ENCODE measurements at regions of chr7 and their contacts with region 1.

Region 1: DNA sequence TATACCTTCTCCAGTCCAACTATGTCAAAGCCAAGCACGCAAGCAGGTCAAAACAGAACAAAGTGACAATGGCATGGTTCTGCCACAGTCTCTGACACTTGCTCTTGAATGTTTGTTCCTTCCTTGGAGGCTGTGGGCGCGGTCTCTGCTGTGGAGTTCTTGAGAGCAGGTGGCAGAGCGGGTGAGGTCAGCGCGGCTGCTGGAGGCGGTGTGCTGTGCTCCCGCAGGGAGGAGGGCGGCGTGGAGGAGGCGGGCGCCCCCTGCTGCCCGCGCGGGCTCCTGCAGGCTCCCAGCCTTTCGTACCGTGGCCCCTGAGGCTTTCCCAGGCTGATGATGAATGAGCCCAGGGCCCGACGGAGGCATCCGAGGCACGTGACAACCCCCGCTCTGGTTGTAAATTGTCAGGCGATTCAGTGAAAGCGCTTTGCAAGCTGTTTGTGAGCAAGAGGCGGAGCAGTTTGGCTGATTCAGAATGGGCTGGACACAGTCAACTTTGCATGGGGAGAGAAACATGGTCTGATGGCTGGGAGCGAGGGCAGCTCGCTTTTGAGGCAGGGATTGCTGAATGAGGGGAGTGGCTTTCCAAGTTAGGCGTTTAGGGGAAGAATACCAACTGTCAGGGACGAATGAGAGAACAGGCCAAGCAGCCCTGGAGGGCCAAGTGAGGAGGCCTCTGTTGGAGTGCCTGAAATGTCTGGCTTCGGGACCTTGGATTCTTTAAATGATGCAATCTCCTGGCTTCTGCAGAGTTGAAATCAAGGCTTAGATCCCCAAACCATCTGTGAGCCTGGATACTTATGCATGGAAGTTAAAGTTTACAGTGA is 46.6 kb downstream of the CDHR3 start:
- DNase-seq: peak; percentile 77 to 89
- ATAC-seq: peak; percentile 92 to 100 (median 99)
- H3K4me3 ChIP-seq: no peak overlapping the region
- H3K4me3 Mint-ChIP-seq: no peak overlapping the region
- H3K27ac ChIP-seq: no peak overlapping the region
- H3K27ac Mint-ChIP-seq: no peak overlapping the region
- H3K4me1 ChIP-seq: peaks cover 10% of the 10 kb centered on the region
- H3K4me1 Mint-ChIP-seq: peaks cover 9 to 13% of the 10 kb centered on the region in 2 donors
- H3K27me3 ChIP-seq: peaks cover 5% of the 10 kb centered on the region
- H3K27me3 Mint-ChIP-seq: peaks cover 24 to 54% of the 10 kb centered on the region in 2 donors
- CTCF ChIP-seq: peak; percentile 93

Region 2: GRCh38 chr7:105652359-105652993 is 357.1 kb before region 1 on chr7:
- intact Hi-C with region 1: loop called (anchors 1 kb)
- DNase-seq: peak; percentile 47 to 76
- ATAC-seq: peak; percentile 69 to 86 (median 76)
- H3K4me3 ChIP-seq: no peak overlapping the region
- H3K4me3 Mint-ChIP-seq: no peak overlapping the region
- H3K27ac ChIP-seq: no peak overlapping the region
- H3K27ac Mint-ChIP-seq: no peak overlapping the region
- H3K4me1 ChIP-seq: no peaks in the 10 kb centered on the region
- H3K4me1 Mint-ChIP-seq: peaks cover 19 to 22% of the 10 kb centered on the region in 2 donors
- H3K27me3 ChIP-seq: no peaks in the 10 kb centered on the region
- H3K27me3 Mint-ChIP-seq: no peaks in the 10 kb centered on the region
- CTCF ChIP-seq: peak; percentile 65

Region 3: GRCh38 chr7:105738133-105738532 is 271.5 kb before region 1 on chr7:
- intact Hi-C with region 1: loop called (anchors 1 kb)
- DNase-seq: peak in 1 of 2 donors; percentile 21
- ATAC-seq: no peak
- H3K4me3 ChIP-seq: no peak overlapping the region
- H3K4me3 Mint-ChIP-seq: no peak overlapping the region
- H3K27ac ChIP-seq: no peak overlapping the region
- H3K27ac Mint-ChIP-seq: no peak overlapping the region
- H3K4me1 ChIP-seq: peaks cover 4% of the 10 kb centered on the region
- H3K4me1 Mint-ChIP-seq: peaks cover 40 to 50% of the 10 kb centered on the region in 2 donors
- H3K27me3 ChIP-seq: no peaks in the 10 kb centered on the region
- H3K27me3 Mint-ChIP-seq: no peaks in the 10 kb centered on the region
- CTCF ChIP-seq: no peak

Region 4: DNA sequence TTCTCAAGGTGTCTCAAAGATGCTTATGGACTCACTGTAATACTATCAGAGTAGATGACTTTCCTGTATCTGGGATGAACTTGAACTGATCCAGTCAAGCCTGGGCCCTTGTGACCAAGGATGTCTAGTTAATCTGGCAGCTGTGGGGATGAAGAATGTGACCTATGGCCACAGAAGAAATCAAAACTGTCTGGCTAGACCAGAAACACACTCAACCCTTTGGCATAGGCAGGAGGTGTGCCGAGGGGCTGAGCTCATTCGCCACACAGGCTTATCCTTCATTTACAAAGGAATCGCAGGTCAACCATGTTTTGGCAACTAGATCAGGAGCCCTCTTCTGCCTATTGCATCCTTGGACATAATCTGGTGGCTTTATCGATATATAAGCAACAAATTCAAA is 243.8 kb before region 1 on chr7:
- intact Hi-C with region 1: loop called (anchors 1 kb)
- DNase-seq: no peak
- ATAC-seq: no peak
- H3K4me3 ChIP-seq: no peak overlapping the region
- H3K4me3 Mint-ChIP-seq: no peak overlapping the region
- H3K27ac ChIP-seq: no peak overlapping the region
- H3K27ac Mint-ChIP-seq: no peak overlapping the region
- H3K4me1 ChIP-seq: peaks cover 5% of the 10 kb centered on the region
- H3K4me1 Mint-ChIP-seq: peaks cover 24 to 44% of the 10 kb centered on the region in 2 donors
- H3K27me3 ChIP-seq: no peaks in the 10 kb centered on the region
- H3K27me3 Mint-ChIP-seq: no peaks in the 10 kb centered on the region
- CTCF ChIP-seq: no peak

Region 5: DNA sequence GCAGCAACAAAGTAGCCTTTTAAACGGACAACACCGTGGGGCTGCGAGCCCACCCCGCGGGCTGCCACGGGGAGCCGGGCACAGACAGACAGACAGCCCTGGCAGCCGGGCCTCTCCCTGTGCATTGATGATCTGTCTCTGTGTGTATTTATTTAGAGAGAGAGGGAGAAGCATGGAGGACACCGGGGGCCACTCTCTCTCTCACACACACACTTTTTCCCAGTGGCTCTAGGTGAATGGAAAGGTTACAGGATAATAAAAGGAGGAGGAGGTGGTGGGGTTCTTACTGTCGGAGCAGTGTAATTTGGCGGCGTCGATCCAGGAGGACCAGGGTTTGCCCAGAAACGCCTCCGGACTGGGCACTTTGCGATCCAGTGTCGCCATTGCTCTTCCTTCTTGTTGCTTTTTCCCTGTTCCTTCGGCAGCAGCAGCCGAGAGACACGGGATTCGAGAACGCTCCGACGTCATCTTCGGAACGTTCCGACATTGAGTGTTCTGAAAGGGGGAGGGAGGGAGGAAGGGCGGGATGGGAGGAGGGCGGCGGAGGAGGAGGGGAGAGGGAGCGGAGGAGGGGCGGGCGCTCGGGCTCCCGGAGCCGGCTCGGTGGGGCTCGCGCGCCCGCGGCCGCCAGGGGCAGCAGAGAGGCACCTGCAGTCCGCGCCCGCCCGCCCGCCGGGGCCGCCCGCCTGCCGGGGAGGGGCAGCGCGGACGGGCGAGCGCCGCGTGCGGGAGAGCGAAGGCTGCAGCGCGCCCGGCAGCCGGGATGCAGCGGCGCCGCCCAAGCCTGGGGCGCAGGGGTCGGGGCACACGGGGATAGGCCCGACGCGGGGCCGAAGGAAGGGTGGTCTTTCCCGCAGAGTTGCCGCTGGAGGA is 133.3 kb before region 1 on chr7 and contains the start of gene ATXN7L1:
- intact Hi-C with region 1: loop called (anchors 5 kb)
- DNase-seq: peak; percentile 90 to 95
- ATAC-seq: peak; percentile 97 to 99 (median 99)
- H3K4me3 ChIP-seq: peak within 1 kb of the TSS; percentile 81
- H3K4me3 Mint-ChIP-seq: peak within 1 kb of the TSS; percentile 98
- H3K27ac ChIP-seq: peak within 1 kb of the TSS; percentile 56
- H3K27ac Mint-ChIP-seq: peak within 1 kb of the TSS; percentile 85 to 96
- H3K4me1 ChIP-seq: peaks cover 31% of the 10 kb centered on the region
- H3K4me1 Mint-ChIP-seq: peaks cover 60 to 61% of the 10 kb centered on the region in 2 donors
- H3K27me3 ChIP-seq: no peaks in the 10 kb centered on the region
- H3K27me3 Mint-ChIP-seq: no peaks in the 10 kb centered on the region
- CTCF ChIP-seq: peak; percentile 32
- total RNA-seq, gene ATXN7L1: 37.5 to 48.6 (median 47.9) TPM

Region 6: GRCh38 chr7:106273009-106273668 is 263.5 kb after region 1 on chr7:
- intact Hi-C with region 1: no loop called
- DNase-seq: no peak
- ATAC-seq: peak in 1 of 3 donors; percentile 9
- H3K4me3 ChIP-seq: no peak overlapping the region
- H3K4me3 Mint-ChIP-seq: no peak overlapping the region
- H3K27ac ChIP-seq: no peak overlapping the region
- H3K27ac Mint-ChIP-seq: no peak overlapping the region
- H3K4me1 ChIP-seq: no peaks in the 10 kb centered on the region
- H3K4me1 Mint-ChIP-seq: no peaks in the 10 kb centered on the region
- H3K27me3 ChIP-seq: no peaks in the 10 kb centered on the region
- H3K27me3 Mint-ChIP-seq: no peaks in the 10 kb centered on the region
- CTCF ChIP-seq: no peak

Measured in natural killer cell (primary cell).